Motor neuron (in vitro differentiated cells): ENCODE measurements at regions of chr1 and their contacts with region 1.

Region 1: GRCh38 chr1:165928075-165928731 is 100.8 kb downstream of the UCK2 start:
- ATAC-seq: peak; percentile 38 to 75 (median 62)
- H3K4me3 ChIP-seq: no peak overlapping the region
- H3K27ac ChIP-seq: no peak overlapping the region
- H3K4me1 ChIP-seq: no peaks in the 10 kb centered on the region

Region 2: DNA sequence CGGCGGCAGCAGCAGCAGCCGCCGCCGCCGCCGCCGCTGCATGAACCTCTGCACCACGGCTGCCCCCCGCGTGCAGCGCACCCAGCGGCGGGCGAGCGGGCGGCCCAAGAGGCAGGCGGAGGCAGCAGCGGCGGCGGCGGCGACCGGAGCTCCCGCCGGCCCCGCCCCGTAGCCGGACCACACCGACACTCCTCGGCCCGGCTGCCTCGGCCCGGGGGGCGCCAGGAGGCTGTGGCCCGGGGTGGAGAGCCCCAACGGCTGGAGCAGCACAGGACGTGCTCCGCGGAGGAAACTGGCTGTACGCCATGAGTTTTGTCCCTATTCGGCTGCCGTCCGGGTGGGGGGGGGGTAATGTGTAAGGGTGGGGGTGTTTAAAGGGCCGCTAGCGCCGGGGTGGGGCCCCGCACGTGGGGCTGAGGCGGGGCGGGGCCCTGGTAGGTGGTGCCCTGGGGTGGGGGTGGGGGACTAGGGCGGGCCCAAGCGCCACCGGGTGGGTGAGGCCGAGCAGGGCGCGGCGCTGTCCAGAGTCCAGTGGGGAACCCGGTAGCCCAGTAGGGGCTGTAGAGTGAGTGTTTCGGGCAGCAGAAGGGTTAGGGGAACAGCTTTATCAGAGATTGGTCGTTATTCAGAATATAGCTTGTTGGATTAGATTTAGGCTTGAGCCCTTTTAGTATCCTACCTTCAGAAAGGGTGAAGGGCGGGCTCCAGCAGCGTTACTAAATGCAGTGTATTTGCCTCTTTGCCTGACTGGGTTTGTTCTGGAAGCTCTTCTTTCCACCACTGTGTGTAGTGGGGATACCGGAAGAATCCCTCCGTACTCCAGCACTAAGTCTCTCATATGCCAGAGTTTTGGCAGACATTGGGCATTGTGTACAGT is 238.7 kb after region 1 on chr1 and contains the start of gene FAM78B:
- in situ Hi-C with region 1: loop called in 2 of 9 experiments (anchors 25 kb)
- ATAC-seq: peak; percentile 33 to 86 (median 80)
- H3K4me3 ChIP-seq: peak within 1 kb of the TSS; percentile 81 to 99 (median 95)
- H3K27ac ChIP-seq: peak within 1 kb of the TSS; percentile 60 to 80
- H3K4me1 ChIP-seq: peaks cover 5 to 8% of the 10 kb centered on the region in 2 donors
- total RNA-seq, gene FAM78B: 2.2 to 7.9 (median 4.9) TPM

Region 3: DNA sequence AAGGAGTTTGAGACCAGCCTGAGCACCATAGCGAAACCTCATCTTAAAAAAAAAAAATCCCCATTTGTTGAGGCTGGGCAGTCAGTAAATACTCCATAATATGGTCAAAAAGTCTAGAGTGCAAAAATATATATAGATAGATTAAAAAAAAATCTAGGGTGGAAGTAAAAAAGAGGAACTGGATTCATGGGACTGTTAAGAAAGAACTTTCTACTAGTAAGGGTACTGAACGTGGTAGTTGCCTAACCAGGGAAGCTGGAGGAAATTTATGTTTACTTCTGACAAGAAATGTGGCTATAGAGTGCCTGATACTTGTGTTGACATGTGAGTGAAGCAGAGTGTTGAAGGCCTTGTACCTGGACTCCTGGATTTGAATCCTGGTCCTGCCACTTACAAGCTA is 504.5 kb after region 1 on chr1:
- in situ Hi-C with region 1: loop called in 2 of 9 experiments (anchors 10 to 25 kb)
- ATAC-seq: no peak
- H3K4me3 ChIP-seq: no peak overlapping the region
- H3K27ac ChIP-seq: no peak overlapping the region
- H3K4me1 ChIP-seq: no peaks in the 10 kb centered on the region

Region 4: GRCh38 chr1:166470014-166470413 is 541.8 kb after region 1 on chr1:
- in situ Hi-C with region 1: loop called in 5 of 9 experiments (anchors 10 to 25 kb)
- ATAC-seq: peak in 7 of 8 experiments; percentile 28 to 79 (median 49)
- H3K4me3 ChIP-seq: no peak overlapping the region
- H3K27ac ChIP-seq: no peak overlapping the region
- H3K4me1 ChIP-seq: peaks cover 2 to 3% of the 10 kb centered on the region in 2 donors

Region 5: DNA sequence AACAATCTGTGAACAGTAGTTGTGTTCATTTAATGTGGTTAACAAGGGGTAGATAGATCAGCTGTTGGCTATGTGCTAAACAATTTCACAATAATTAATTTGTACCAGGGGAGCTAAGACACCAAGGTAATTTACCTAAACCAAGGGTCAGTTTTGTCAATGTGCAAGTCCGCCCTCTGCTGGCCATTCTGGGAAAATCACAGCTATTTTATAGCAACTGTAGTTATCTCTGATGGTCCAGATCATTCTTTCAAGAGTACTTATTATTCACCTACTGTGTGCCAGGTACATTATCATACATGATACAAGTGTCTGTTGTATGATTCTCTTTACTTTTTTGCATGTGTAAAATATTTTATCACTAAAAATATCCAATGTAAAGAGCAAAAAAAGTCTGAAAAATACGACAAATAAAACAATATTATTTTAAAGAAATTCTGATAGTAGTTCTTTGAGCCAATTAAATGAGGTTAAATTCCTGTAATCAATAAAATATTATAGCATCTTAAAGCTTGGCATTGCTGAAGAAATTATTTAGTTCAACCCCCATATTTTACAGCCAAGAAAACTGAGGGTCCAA is 550.9 kb after region 1 on chr1:
- in situ Hi-C with region 1: loop called in 6 of 9 experiments (anchors 10 to 25 kb)
- ATAC-seq: peak in 2 of 8 experiments; percentile 32 to 58
- H3K4me3 ChIP-seq: no peak overlapping the region
- H3K27ac ChIP-seq: no peak overlapping the region
- H3K4me1 ChIP-seq: no peaks in the 10 kb centered on the region